ENCODE measurements at regions of chr7 and their contacts with region 1.

Region 1: GRCh38 chr7:16564909-16565426 is 38.3 kb downstream of the LRRC72 start:
- DNase-seq: no peak
- ATAC-seq: peak; percentile 51

Region 2: GRCh38 chr7:15764851-15765382 is 800.1 kb before region 1 on chr7:
- intact Hi-C with region 1: no loop called
- DNase-seq: no peak
- ATAC-seq: peak; percentile 76

Region 3: GRCh38 chr7:16071246-16071857 is 493.6 kb before region 1 on chr7:
- intact Hi-C with region 1: loop called (anchors 10 kb)
- DNase-seq: no peak
- ATAC-seq: peak; percentile 52

Region 4: DNA sequence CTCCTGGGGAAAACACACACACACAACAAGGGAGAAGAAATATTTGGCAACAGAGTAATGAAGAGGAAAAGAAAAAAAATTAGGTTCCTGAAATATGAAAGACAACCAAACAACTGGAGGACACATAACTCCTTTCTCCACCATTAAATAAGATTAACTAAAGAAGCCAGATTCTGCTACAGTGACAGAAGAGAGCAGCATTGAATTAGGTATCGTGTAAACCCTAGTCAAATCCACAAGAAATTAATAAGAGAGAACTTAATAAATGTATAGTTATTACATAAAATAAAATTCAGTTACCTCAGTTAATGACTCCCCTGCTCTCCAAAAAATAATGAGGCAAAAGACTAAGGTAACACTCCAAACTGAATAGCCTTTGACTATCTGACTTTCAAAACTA is 450.3 kb before region 1 on chr7:
- intact Hi-C with region 1: loop called (anchors 5 kb)
- DNase-seq: no peak
- ATAC-seq: no peak

Region 5: DNA sequence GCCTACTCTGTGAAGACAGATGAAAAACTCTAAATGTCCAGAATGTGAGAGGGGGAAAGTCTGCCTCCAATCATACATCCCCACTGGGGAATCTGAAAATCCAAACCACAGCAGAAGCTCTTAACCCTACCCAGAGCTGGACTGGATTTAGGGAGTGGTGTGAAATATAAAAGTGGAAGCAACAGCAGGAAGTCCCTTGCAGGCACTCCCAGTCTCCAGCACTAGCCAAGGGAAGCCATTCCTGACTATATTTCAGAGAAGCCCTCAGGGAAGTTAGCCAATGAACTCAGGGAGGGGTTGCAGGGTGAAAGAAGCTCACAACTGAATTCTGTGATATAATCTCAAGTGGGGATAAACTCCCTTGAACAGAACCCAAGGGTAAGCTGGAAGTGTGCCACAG is 195.1 kb before region 1 on chr7:
- intact Hi-C with region 1: no loop called
- DNase-seq: no peak
- ATAC-seq: no peak

Region 6: DNA sequence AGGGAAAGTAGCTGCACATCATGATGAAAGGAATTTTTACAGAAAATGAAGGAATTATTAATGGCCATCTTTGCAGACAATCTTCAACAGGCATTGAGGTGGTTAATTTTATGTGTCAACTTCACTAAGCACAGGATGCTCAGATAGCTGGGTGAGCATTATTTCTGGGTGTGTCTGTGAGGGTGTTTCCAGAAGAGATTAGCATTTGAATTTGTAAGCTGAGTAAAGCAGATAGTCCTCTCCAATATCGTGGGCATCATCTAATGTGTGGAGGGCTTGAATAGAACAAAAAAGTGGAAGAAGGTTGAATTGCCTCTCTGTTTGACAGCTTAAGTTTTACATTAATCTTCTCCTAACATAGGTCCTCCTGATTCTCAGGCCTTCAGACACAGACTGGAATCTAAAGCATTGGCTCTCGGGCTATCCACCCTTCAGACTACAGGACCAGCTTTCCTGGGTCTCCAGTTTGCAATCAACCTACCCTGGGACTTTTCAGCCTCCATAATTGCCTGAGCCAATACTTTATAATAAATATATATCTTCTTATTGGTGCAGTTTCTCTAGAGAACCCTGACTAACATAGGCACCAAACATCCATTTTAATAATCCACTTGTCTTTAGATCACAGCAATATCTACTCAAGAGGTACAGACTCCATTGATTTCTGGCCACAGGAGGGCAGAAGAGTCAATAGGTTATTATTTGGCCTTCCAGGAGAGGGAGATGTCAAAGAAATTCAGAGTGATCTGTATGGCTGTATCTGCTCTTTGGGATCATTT is 133.1 kb before region 1 on chr7:
- intact Hi-C with region 1: loop called (anchors 5 kb)
- DNase-seq: no peak
- ATAC-seq: peak; percentile 74

Region 7: GRCh38 chr7:16484453-16485158 is 80.4 kb before region 1 on chr7:
- intact Hi-C with region 1: no loop called
- DNase-seq: no peak
- ATAC-seq: no peak

Measured in left ventricle myocardium superior (tissue), 1 donor.